AG04449 (cell line): ENCODE measurements at regions of chr2 and their contacts with region 1.

Region 1: GRCh38 chr2:169824373-169825333 is at the start of gene METTL5:
- DNase-seq: no peak
- H3K4me3 ChIP-seq: peak within 1 kb of the TSS; percentile 81
- CTCF ChIP-seq: peak; percentile 84

Region 2: DNA sequence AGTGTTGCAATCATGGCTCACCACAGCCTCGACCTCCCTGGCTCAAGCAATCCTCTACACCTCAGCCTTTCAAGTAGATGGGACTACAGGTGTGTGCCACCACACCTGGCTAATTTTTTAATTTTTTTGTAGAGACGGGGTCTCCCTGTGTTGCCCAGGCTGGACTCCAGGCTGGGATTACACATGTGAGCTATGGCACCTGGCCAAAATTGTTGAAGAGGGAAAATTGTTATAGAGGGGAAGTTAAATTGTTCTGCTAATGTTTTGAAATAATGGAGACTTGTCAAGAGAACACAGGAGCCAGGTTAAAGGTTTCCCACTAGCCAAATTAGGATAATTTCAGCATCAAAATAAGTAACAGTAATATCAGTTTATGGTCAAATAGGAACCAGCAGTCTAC is 215.4 kb before region 1 on chr2:
- CTCF ChIA-PET with region 1: no interaction called
- POLR2A ChIA-PET with region 1: no interaction called
- DNase-seq: no peak
- H3K4me3 ChIP-seq: no peak overlapping the region
- CTCF ChIP-seq: no peak

Region 3: DNA sequence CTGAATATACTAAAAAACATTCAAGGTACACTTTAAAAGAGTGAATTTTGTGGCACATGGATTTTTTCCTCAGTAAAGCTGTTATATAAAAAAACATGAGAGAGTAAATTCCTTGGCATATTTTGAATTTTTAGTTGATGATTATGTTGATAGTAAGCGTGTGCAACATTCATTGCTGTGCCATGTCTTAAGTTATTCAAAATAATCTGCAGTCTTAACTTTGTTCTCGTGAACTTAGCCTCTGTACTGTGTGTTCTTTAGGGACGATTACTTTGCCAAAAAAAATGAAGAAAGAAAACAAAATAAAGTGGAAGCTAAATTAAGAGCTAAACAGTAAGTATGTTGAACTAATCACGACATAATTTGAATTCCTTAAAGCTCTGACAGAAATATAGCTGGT is 16.4 kb before region 1 on chr2:
- CTCF ChIA-PET with region 1: interaction called, 19 read pairs
- POLR2A ChIA-PET with region 1: interaction called, 5 read pairs
- DNase-seq: peak; percentile 78
- H3K4me3 ChIP-seq: no peak overlapping the region
- CTCF ChIP-seq: no peak

Region 4: DNA sequence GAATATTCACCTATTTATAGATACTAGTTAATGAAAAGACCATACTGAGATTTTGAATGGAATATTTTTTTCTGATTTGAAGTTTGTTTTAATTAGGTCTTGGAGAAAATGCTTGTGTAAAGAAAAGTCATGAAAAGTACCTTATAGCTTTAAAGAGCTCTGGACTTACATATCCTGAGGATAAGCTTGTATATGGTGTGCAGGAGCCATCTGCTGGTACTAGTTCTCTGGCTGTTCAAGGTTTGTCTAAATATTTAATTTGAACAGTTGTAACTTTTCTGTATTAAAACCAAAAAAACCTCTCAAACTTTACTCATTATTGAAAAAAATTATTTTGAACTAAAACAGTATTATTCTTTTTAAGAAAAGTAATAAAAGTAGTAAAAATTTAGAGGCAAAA is 52.7 kb after region 1 on chr2:
- CTCF ChIA-PET with region 1: interaction called, 10 read pairs
- POLR2A ChIA-PET with region 1: interaction called, 4 read pairs
- DNase-seq: no peak
- H3K4me3 ChIP-seq: no peak overlapping the region
- CTCF ChIP-seq: peak; percentile 16